CD4-positive, alpha-beta T cell (primary cell): ENCODE measurements at regions of chr7 and their contacts with region 1.

Region 1: DNA sequence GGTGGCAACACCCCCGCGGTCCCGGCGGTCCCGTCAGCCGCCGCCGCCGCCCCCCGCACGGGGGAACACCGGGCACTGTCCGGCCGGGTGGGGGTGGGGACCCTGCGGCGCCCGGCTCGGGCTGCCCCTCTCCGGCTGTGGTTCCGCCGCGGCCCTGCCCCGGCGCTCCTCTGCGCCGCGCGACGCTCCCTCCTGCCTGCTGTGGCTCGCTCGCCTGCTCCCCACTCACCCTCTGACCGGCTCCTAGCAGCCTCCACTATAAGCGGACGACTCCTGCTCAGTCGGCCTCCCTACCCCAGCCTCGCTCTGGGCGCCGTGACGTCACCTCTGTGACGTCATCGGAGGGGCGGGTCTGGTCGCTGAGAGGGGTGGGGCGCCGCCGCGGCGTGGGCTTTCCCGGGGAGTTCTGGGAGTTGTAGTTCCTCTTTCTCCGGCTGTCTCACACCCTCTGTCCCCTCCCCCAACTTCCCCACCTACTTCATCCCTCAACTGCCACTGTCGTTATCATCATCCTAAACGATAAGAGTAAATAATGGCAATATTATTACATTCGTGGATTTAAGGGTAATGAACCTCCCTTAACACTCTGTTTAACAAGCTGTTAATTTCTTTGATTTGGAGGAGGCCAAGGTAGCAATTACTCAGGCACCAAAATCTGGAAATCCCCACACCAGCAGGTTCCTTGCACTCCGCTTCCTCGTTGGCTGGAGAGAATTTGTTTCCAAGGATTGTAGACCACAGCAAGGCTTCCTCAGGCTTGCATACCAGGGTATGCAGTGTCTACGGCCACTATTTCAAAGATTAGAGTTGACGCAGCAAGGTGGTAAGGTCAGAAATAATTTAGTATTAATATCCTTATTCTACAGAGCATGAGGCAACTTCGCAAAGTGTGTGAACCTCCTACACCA is at the start of gene UBE2H:
- DNase-seq: peak; percentile 84 to 96 (median 91)
- ATAC-seq: peak; percentile 75
- H3K4me3 ChIP-seq: peak within 1 kb of the TSS; percentile 78
- H3K4me3 Mint-ChIP-seq: peak within 1 kb of the TSS; percentile 99
- H3K27ac ChIP-seq: peak within 1 kb of the TSS; percentile 82 to 89
- H3K27ac Mint-ChIP-seq: no peak within 1 kb of the TSS
- H3K4me1 ChIP-seq: peaks cover 35% of the 10 kb centered on the region
- H3K4me1 Mint-ChIP-seq: peaks cover 6% of the 10 kb centered on the region
- H3K27me3 ChIP-seq: no peaks in the 10 kb centered on the region
- H3K27me3 Mint-ChIP-seq: no peaks in the 10 kb centered on the region
- CTCF ChIP-seq: no peak
- total RNA-seq, gene UBE2H: 52.1 to 52.5 TPM

Region 2: DNA sequence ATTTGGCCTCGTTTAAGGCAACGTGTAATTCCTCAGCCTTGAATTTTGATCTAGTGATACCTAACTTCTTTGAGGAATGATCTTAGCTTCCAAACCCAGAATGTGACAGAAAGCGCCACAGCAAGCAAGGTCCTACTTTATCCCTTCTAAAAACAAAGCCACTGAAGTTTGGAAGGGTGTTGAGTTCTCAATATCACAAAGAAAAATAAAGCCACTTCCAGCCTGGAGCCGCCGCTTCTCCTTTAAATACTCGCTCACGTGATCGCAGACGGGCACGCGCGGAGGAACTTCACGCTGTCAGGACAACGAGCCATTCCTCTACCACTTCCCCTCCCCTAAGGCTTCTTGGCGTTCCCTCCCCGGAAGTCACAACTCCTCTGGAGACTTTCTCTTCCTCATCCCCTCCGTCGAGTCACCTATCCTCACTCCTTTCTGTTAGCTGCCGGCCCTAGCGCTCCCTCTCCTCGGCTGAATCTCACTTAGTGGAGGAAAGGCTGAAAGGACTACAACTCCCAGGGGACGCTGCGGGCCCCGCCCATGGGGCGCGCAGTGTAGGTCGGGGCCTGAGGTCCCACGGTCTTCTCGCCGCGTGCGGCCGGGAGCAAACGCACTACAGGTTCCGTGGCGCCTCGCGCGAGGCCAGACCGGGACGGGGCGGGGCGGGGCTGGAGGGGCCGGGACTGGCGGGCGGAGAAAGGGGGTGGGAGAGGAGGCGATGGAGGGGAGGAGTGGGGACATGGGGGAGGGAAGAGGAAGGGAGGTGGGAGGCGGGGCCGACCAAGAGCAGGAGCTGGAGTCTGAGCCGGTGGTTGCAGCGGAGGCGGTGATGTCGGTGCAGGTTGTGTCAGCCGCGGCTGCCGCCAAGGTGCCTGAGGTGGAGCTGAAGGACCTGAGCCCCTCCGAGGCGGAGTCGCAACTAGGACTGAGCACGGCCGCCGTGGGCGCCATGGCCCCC is 728.4 kb before region 1 on chr7 and contains the start of gene AHCYL2:
- CTCF ChIA-PET with region 1: no interaction called
- POLR2A ChIA-PET with region 1: no interaction called
- intact Hi-C with region 1: loop called in 1 of 2 experiments (anchors 5 kb)
- DNase-seq: peak; percentile 96 to 99 (median 98)
- ATAC-seq: peak; percentile 89
- H3K4me3 ChIP-seq: peak within 1 kb of the TSS; percentile 91
- H3K4me3 Mint-ChIP-seq: peak within 1 kb of the TSS; percentile 96
- H3K27ac ChIP-seq: peak within 1 kb of the TSS; percentile 72 to 97
- H3K27ac Mint-ChIP-seq: peak within 1 kb of the TSS; percentile 89
- H3K4me1 ChIP-seq: peaks cover 25% of the 10 kb centered on the region
- H3K4me1 Mint-ChIP-seq: peaks cover 56% of the 10 kb centered on the region
- H3K27me3 ChIP-seq: no peaks in the 10 kb centered on the region
- H3K27me3 Mint-ChIP-seq: no peaks in the 10 kb centered on the region
- CTCF ChIP-seq: no peak
- total RNA-seq, gene AHCYL2: 5.8 to 6.0 TPM

Region 3: GRCh38 chr7:129438839-129439651 is 513.9 kb before region 1 on chr7:
- CTCF ChIA-PET with region 1: no interaction called
- POLR2A ChIA-PET with region 1: no interaction called
- intact Hi-C with region 1: no loop called
- DNase-seq: peak in 1 of 14 experiments; percentile 18
- ATAC-seq: no peak
- H3K4me3 ChIP-seq: no peak overlapping the region
- H3K4me3 Mint-ChIP-seq: no peak overlapping the region
- H3K27ac ChIP-seq: no peak overlapping the region
- H3K27ac Mint-ChIP-seq: no peak overlapping the region
- H3K4me1 ChIP-seq: peaks cover 9% of the 10 kb centered on the region
- H3K4me1 Mint-ChIP-seq: peaks cover 8% of the 10 kb centered on the region
- H3K27me3 ChIP-seq: peaks cover 15 to 27% of the 10 kb centered on the region in 2 experiments
- H3K27me3 Mint-ChIP-seq: peaks cover 26% of the 10 kb centered on the region
- CTCF ChIP-seq: no peak

Region 4: GRCh38 chr7:129906700-129907099 is 46.2 kb before region 1 on chr7:
- CTCF ChIA-PET with region 1: no interaction called
- POLR2A ChIA-PET with region 1: interaction called, 6 read pairs
- intact Hi-C with region 1: loop called (anchors 2 to 5 kb)
- DNase-seq: peak in 3 of 14 experiments; percentile 26 to 59 (median 34)
- ATAC-seq: peak; percentile 73
- H3K4me3 ChIP-seq: peak overlapping the region; percentile 2
- H3K4me3 Mint-ChIP-seq: peak overlapping the region; percentile 64
- H3K27ac ChIP-seq: peak overlapping the region; percentile 22 to 58
- H3K27ac Mint-ChIP-seq: peak overlapping the region; percentile 81
- H3K4me1 ChIP-seq: peaks cover 59% of the 10 kb centered on the region
- H3K4me1 Mint-ChIP-seq: peaks cover 96% of the 10 kb centered on the region
- H3K27me3 ChIP-seq: no peaks in the 10 kb centered on the region
- H3K27me3 Mint-ChIP-seq: no peaks in the 10 kb centered on the region
- CTCF ChIP-seq: no peak

Region 5: GRCh38 chr7:130050773-130051125 is 97.8 kb after region 1 on chr7:
- CTCF ChIA-PET with region 1: no interaction called
- POLR2A ChIA-PET with region 1: no interaction called
- intact Hi-C with region 1: loop called in 1 of 2 experiments (anchors 5 kb)
- DNase-seq: no peak
- ATAC-seq: no peak
- H3K4me3 ChIP-seq: peak overlapping the region; percentile 85
- H3K4me3 Mint-ChIP-seq: peak overlapping the region; percentile 98
- H3K27ac ChIP-seq: peak overlapping the region; percentile 29 to 45
- H3K27ac Mint-ChIP-seq: peak overlapping the region; percentile 81
- H3K4me1 ChIP-seq: peaks cover 15% of the 10 kb centered on the region
- H3K4me1 Mint-ChIP-seq: peaks cover 10% of the 10 kb centered on the region
- H3K27me3 ChIP-seq: no peaks in the 10 kb centered on the region
- H3K27me3 Mint-ChIP-seq: no peaks in the 10 kb centered on the region
- CTCF ChIP-seq: no peak

Region 6: GRCh38 chr7:130227883-130228575 is 275.1 kb after region 1 on chr7:
- CTCF ChIA-PET with region 1: no interaction called
- POLR2A ChIA-PET with region 1: no interaction called
- intact Hi-C with region 1: no loop called
- DNase-seq: no peak
- ATAC-seq: no peak
- H3K4me3 ChIP-seq: no peak overlapping the region
- H3K4me3 Mint-ChIP-seq: no peak overlapping the region
- H3K27ac ChIP-seq: no peak overlapping the region
- H3K27ac Mint-ChIP-seq: no peak overlapping the region
- H3K4me1 ChIP-seq: no peaks in the 10 kb centered on the region
- H3K4me1 Mint-ChIP-seq: no peaks in the 10 kb centered on the region
- H3K27me3 ChIP-seq: no peaks in the 10 kb centered on the region
- H3K27me3 Mint-ChIP-seq: no peaks in the 10 kb centered on the region
- CTCF ChIP-seq: no peak

Region 7: GRCh38 chr7:130440527-130441365 is 487.8 kb after region 1 on chr7 and contains the start of gene CEP41:
- CTCF ChIA-PET with region 1: no interaction called
- POLR2A ChIA-PET with region 1: no interaction called
- intact Hi-C with region 1: loop called in 1 of 2 experiments (anchors 5 kb)
- DNase-seq: peak; percentile 81 to 95 (median 86)
- ATAC-seq: peak; percentile 95
- H3K4me3 ChIP-seq: peak within 1 kb of the TSS; percentile 67
- H3K4me3 Mint-ChIP-seq: peak within 1 kb of the TSS; percentile 99
- H3K27ac ChIP-seq: peak within 1 kb of the TSS; percentile 58 to 65
- H3K27ac Mint-ChIP-seq: peak within 1 kb of the TSS; percentile 89
- H3K4me1 ChIP-seq: peaks cover 13% of the 10 kb centered on the region
- H3K4me1 Mint-ChIP-seq: peaks cover 59% of the 10 kb centered on the region
- H3K27me3 ChIP-seq: no peaks in the 10 kb centered on the region
- H3K27me3 Mint-ChIP-seq: no peaks in the 10 kb centered on the region
- CTCF ChIP-seq: no peak
- total RNA-seq, gene CEP41: 3.3 to 4.8 TPM